Tibial artery (tissue), 4 donors: ENCODE measurements at regions of chr15 and their contacts with region 1.

Region 1: GRCh38 chr15:64810497-64811326 is 14.7 kb downstream of the PIF1 start:
- DNase-seq: no peak
- H3K4me3 ChIP-seq: no peak overlapping the region
- H3K27ac ChIP-seq: no peak overlapping the region
- H3K4me1 ChIP-seq: peaks cover 0 to 14% (median 0%) of the 10 kb centered on the region in 4 donors
- H3K27me3 ChIP-seq: no peaks in the 10 kb centered on the region
- CTCF ChIP-seq: no peak

Region 2: GRCh38 chr15:63362196-63362595 is 1448.5 kb before region 1 on chr15:
- intact Hi-C with region 1: no loop called
- DNase-seq: no peak
- H3K4me3 ChIP-seq: no peak overlapping the region
- H3K27ac ChIP-seq: no peak overlapping the region
- H3K4me1 ChIP-seq: no peaks in the 10 kb centered on the region
- H3K27me3 ChIP-seq: no peaks in the 10 kb centered on the region
- CTCF ChIP-seq: no peak

Region 3: GRCh38 chr15:64731012-64731806 is 79.5 kb before region 1 on chr15:
- intact Hi-C with region 1: loop called (anchors 1 kb)
- DNase-seq: peak; percentile 84 to 89
- H3K4me3 ChIP-seq: no peak overlapping the region
- H3K27ac ChIP-seq: peak overlapping the region in 1 of 2 donors; percentile 38
- H3K4me1 ChIP-seq: peaks cover 0 to 8% (median 3%) of the 10 kb centered on the region in 4 donors
- H3K27me3 ChIP-seq: no peaks in the 10 kb centered on the region
- CTCF ChIP-seq: peak; percentile 92 to 95

Region 4: DNA sequence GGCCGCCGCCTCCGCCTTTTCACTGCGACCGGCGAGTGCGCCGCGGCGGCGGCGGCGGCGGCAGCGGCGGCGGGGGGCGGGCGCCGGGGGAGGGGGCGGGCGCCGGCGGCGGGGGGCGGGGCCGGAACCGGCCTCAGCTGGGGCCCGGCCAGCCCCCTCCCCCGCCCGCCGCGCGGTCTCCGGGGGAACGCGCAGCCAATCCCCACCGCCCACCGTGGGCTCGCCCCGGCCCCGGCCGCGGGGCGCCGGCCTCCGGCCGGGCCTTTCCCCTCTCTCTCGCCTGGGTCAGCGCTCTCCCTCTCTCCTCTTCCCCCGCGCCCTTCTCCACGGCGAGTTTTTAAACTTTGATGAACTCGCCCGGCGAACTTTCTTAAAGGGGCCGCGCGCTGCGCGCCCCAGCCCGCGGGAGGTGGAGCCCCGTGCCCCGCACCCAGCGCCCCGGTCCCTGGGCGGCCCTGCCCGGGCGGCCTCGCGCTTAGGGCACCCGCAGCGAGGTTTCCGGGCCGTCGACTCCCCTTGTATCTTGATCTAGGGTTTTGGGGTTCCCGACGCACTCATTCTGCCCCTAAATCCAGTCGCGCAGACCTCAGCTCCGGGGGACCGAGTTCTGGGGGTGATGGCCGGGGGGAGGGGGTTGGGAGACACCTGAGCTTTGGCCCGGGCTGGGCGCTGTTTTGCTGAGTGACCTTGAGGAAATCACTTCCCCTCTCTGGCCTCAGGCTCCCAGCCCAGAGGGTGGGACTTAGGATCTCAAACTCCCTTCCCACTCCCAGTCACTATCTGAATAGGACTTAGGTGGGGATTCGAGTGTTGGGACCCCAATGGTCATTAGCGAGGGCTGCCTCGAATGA is 34.9 kb before region 1 on chr15 and contains the start of gene RBPMS2:
- intact Hi-C with region 1: no loop called
- DNase-seq: peak in 1 of 2 donors; percentile 36
- H3K4me3 ChIP-seq: peak within 1 kb of the TSS; percentile 75 to 76
- H3K27ac ChIP-seq: peak within 1 kb of the TSS; percentile 88 to 96
- H3K4me1 ChIP-seq: peaks cover 0 to 41% (median 8%) of the 10 kb centered on the region in 4 donors
- H3K27me3 ChIP-seq: no peaks in the 10 kb centered on the region
- CTCF ChIP-seq: no peak

Region 5: DNA sequence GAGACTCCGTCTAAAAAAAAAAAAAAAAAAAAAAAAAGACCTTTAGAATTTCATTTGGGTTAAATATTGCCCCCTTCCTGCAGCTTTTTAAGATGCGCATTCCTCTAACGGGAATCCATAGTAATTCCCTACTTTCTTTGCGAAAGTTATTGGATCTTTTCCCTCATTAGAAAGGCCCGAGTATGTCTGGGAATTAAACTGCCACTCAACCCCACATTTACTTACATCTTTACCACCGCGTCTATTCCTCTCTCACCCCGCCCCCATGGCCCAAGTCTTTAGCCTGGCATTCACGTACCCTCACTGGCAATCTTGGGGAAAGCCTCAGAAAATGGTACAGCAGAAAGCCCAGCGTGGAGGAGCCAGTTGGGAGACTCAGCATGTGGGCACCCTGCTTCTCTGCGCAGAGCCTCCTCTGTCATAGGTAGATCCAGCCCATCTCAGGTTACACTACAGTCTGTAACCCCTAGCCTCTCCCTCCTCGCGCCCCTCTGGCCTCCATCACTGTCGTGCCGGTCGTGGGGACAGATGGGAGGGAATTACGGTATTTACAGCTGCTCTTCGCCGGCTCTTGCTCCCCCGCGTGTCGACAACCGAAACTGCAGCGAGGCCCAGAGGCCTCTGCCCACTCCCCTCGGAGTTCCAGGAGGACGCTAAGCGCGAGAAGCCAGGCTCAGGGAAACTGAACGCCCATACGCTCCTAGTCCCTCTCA is 94.6 kb after region 1 on chr15:
- intact Hi-C with region 1: no loop called
- DNase-seq: peak; percentile 74 to 87
- H3K4me3 ChIP-seq: peak overlapping the region; percentile 43 to 46
- H3K27ac ChIP-seq: peak overlapping the region in 1 of 2 donors; percentile 58
- H3K4me1 ChIP-seq: peaks cover 0 to 9% (median 3%) of the 10 kb centered on the region in 4 donors
- H3K27me3 ChIP-seq: no peaks in the 10 kb centered on the region
- CTCF ChIP-seq: peak; percentile 83 to 88